ENCODE measurements at regions of chr4 and their contacts with region 1.

Region 1: GRCh38 chr4:76634239-76634638 is 199.2 kb downstream of the SHROOM3 start:
- DNase-seq: peak; percentile 37
- H3K4me3 ChIP-seq: peak overlapping the region in 1 of 3 experiments; percentile 24
- H3K27ac ChIP-seq: peak overlapping the region; percentile 38
- H3K4me1 ChIP-seq: peaks cover 24% of the 10 kb centered on the region
- H3K27me3 ChIP-seq: no peaks in the 10 kb centered on the region
- CTCF ChIP-seq: no peak
- POLR2A ChIP-seq: no peak

Region 2: GRCh38 chr4:75995727-75996126 is 638.5 kb before region 1 on chr4:
- CTCF ChIA-PET with region 1: no interaction called
- POLR2A ChIA-PET with region 1: no interaction called
- dilution Hi-C with region 1: no loop called
- intact Hi-C with region 1: no loop called
- DNase-seq: peak; percentile 40
- H3K4me3 ChIP-seq: no peak overlapping the region
- H3K27ac ChIP-seq: no peak overlapping the region
- H3K4me1 ChIP-seq: no peaks in the 10 kb centered on the region
- H3K27me3 ChIP-seq: peaks cover 7 to 8% of the 10 kb centered on the region in 2 experiments
- CTCF ChIP-seq: peak; percentile 28 to 46
- POLR2A ChIP-seq: no peak

Region 3: GRCh38 chr4:76658231-76659102 is 24.2 kb after region 1 on chr4:
- CTCF ChIA-PET with region 1: no interaction called
- POLR2A ChIA-PET with region 1: no interaction called
- dilution Hi-C with region 1: no loop called
- intact Hi-C with region 1: loop called (anchors 1 kb)
- DNase-seq: peak; percentile 79
- H3K4me3 ChIP-seq: no peak overlapping the region
- H3K27ac ChIP-seq: peak overlapping the region; percentile 83
- H3K4me1 ChIP-seq: peaks cover 23% of the 10 kb centered on the region
- H3K27me3 ChIP-seq: no peaks in the 10 kb centered on the region
- CTCF ChIP-seq: no peak
- POLR2A ChIP-seq: peak; percentile 39